GM10248 (cell line): ENCODE measurements at regions of chr10 and their contacts with region 1.

Region 1: GRCh38 chr10:5299950-5300349 is 64.8 kb upstream of the UCN3 start:
- DNase-seq: no peak
- CTCF ChIP-seq: no peak

Region 2: DNA sequence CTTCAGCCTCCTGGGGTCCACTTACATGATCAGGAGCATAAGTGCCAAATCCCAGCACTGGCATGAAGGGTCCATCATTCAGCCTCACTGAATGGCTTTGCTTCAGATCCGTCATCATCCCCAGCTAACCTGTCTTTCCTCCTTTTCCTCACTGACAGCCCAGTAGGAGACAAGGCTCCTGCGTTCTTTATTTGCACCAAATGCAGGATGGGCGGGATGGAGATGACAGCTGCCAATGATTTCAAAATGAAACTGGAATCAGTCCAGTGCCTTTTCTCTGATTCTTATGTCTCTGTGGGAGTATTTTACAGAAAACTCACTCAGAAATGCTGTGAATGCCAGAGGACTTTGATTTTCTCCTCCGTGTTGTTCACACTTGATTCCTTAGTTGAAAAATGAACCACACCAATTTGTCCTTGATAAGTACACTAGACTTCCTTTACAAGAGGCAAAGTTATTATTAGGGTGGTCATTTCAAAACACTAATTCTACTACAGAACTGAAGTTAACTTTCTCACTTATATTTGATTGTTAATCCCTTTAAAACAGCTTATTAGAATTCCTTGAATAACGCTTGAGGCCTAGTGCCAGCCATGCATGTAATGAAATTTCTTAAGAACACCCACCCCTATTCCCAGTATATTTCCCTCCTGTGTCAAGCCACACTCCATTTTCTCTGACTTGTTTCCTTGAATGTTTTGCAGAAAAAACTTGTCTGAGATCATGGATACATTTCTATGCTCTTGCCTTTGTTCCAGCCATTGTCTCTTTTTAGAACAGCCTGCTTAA is 114.8 kb before region 1 on chr10 and contains the start of gene AKR1C8:
- CTCF ChIA-PET with region 1: no interaction called
- POLR2A ChIA-PET with region 1: no interaction called
- DNase-seq: no peak
- CTCF ChIP-seq: no peak

Region 3: DNA sequence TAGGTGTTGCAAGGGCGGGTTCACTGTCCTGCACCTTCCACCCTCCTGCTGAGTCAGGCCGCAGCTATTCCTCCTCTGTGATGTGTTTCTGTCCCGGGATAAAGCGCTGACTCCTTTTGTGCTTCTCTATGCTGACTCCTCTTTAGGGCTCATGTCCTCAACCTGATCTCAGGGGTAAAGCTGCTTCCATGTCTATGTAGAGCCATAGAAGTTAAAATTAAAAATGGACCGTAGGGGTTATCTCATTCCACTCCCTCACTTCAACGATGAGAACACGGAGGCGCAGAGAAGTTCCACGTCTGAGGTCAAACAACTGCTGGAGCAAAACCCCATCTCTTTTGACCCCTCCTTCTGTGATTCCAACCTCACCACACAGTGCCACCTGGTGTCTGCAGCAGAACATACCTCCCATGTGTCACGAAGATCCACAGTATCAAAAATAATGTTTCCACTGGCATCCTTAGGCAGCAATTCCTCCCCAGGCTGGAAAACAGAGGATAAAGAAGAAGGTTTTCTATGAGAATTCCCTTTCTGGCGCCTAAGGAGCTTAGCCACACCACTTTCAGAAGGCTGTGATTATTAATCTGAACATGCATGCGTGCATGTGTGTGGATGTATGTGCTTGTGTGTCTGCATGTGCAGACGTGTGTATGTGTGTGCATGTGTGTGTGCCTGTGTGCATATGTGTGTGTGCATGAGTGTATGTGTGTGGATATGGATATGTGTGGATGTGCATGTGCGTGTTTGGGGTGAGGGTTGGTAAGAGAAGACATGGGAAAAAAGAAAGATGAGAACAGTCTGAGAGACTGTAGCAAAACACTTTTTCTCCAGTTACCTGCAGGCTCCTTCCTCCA is 16.4 kb before region 1 on chr10:
- CTCF ChIA-PET with region 1: interaction called, 10 read pairs
- POLR2A ChIA-PET with region 1: no interaction called
- DNase-seq: no peak
- CTCF ChIP-seq: peak; percentile 44